Left lung (tissue), 14 donors: ENCODE measurements at regions of chr19 and their contacts with region 1.

Region 1: DNA sequence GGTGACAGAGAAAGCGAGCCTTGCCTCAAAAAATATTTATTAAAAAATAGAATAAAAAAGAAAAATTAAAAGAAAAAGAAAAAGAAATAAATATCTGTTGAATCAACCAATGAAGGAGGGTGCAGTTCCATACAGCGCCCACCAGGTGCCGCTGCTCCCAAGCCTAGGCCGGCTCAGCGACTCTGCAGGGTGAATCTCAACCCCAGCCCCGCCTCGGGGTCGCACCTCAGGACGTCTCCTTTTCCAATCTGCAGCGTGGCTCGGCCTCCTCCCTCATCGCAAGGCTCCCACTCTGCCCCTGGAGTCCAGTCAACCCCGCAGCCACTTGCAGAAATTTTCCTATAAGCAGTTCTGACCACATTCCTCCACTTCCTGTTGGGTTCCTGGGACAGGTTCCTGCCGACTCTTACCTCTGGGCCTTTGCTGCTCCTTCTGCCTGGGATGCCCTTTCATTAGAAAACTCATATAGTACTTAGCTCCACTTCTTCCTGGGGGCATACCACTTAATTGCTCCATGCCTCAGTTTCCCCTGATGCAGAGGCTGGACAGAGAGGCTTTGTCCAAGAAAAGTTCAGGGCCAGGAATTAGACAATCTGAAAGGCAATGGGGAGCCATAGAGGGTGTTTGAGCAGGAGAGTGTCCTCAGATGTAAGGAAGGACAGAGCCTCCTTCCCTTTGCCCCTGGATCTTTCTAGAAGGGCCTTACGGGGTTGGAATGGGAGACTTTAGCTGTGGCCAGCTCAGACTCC is 24.3 kb downstream of the NFILZ start:
- DNase-seq: peak in 3 of 4 donors; percentile 50 to 92 (median 58)
- ATAC-seq: peak; percentile 96
- H3K4me3 ChIP-seq: no peak overlapping the region
- H3K27ac ChIP-seq: no peak overlapping the region
- H3K4me1 ChIP-seq: peaks cover 0 to 14% of the 10 kb centered on the region in 2 donors
- H3K27me3 ChIP-seq: peaks cover 0 to 54% of the 10 kb centered on the region in 2 donors
- CTCF ChIP-seq: peak; percentile 90 to 99

Region 2: DNA sequence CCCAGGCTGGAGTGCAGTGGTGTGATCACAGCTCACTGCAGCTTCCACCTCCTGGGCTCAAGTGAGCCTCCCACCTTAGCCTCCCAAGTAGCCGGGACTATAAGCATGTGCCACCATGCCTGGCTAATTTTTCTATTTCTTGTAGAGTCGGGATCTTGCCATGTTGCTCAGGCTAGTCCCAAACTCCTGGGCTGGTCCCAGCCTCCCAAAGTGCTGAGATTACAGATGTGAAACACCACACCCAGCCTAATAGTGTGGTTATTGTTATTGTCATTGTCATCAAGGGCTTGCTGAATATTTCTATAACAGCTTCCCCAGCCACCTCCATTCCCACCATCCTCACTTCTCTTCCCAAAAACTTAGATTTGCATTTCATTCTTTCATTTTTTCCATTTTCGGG is 69.5 kb after region 1 on chr19:
- intact Hi-C with region 1: no loop called
- DNase-seq: no peak
- ATAC-seq: no peak
- H3K4me3 ChIP-seq: no peak overlapping the region
- H3K27ac ChIP-seq: no peak overlapping the region
- H3K4me1 ChIP-seq: no peaks in the 10 kb centered on the region
- H3K27me3 ChIP-seq: peaks cover 0 to 16% of the 10 kb centered on the region in 2 donors
- CTCF ChIP-seq: no peak

Region 3: GRCh38 chr19:9075064-9075949 is 420.5 kb after region 1 on chr19:
- intact Hi-C with region 1: loop called in 1 of 2 experiments (anchors 5 kb)
- DNase-seq: peak; percentile 31 to 78 (median 71)
- ATAC-seq: peak; percentile 93
- H3K4me3 ChIP-seq: no peak overlapping the region
- H3K27ac ChIP-seq: no peak overlapping the region
- H3K4me1 ChIP-seq: no peaks in the 10 kb centered on the region
- H3K27me3 ChIP-seq: no peaks in the 10 kb centered on the region
- CTCF ChIP-seq: no peak